Posterior vena cava (tissue), 2 donors: ENCODE measurements at regions of chr20 and their contacts with region 1.

Region 1: GRCh38 chr20:49969946-49970345 is 12.8 kb upstream of the SNAI1 start:
- DNase-seq: peak; percentile 10

Region 2: GRCh38 chr20:50043573-50044378 is 73.8 kb after region 1 on chr20:
- intact Hi-C with region 1: loop called in 1 of 2 experiments (anchors 2 kb)
- DNase-seq: peak; percentile 57